ENCODE measurements at regions of chr1 and their contacts with region 1.

Region 1: DNA sequence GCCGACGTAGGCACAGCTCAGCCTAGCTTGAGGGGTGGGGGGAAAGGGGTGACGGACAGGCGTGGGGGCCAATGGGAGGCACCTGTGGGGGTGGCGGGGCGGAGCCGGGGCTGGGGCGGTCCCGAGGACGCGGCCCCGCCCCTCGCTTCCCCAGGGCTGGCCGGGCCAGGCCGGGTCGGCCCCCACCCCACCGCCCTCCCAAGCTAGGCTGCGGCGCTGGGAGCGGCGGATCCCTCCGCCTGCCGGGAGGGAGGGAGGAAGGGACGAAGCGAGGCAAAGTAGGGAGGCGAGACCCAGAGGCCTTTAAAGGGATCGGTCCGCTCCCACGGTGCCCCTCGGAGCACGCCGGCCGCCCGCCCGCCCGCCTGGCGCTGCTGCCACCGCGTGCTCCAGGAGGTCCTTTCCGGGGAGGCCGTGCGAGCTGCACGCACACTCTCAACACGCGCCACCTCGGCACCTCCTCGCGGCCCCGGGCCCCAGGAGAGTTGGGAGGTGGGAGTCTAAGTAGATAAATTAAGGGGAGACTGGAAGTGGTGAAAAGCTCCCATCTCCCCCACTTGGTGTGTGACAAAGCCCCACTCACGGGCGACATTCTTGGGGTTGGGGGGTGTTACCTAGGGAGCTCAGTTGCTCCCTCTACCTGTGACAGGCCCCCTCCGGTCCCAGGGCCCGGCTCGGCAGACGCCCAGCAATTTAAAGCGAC is 373 bp upstream of the MEF2D start:
- DNase-seq: peak; percentile 96
- CTCF ChIP-seq: peak; percentile 63

Region 2: DNA sequence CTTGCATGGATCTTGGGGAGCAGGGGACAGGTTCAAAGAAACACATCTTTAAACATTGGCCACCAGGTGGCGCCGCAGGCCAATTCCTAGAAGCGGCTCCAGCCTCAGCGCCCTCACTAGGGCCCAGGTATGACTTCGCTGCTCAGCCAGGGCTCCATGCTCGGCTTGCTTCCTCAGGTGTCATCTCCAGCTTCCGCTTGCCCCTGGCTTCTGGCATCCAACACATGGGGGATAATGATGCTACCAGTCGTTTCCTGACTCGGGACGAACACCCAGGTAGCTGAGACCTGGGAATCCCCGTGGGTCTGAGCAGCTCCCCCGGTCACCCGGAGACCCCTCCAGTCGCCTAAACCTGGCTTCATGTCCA is 410.1 kb before region 1 on chr1:
- in situ Hi-C with region 1: no loop called
- DNase-seq: peak; percentile 86
- CTCF ChIP-seq: peak; percentile 59

Region 3: GRCh38 chr1:156560585-156561183 is 59.7 kb after region 1 on chr1:
- in situ Hi-C with region 1: loop called (anchors 10 kb)
- DNase-seq: no peak
- CTCF ChIP-seq: no peak

Measured in GM13976 (cell line).